ENCODE measurements at regions of chr5 and their contacts with region 1.

Region 1: GRCh38 chr5:4684946-4685345 is 455.2 kb upstream of the ADAMTS16 start:
- DNase-seq: no peak
- ATAC-seq: no peak
- H3K4me3 ChIP-seq: no peak overlapping the region
- H3K27ac ChIP-seq: no peak overlapping the region
- H3K4me1 ChIP-seq: no peaks in the 10 kb centered on the region
- H3K27me3 ChIP-seq: peaks cover 0 to 2% (median 0%) of the 10 kb centered on the region in 7 donors
- CTCF ChIP-seq: no peak

Region 2: DNA sequence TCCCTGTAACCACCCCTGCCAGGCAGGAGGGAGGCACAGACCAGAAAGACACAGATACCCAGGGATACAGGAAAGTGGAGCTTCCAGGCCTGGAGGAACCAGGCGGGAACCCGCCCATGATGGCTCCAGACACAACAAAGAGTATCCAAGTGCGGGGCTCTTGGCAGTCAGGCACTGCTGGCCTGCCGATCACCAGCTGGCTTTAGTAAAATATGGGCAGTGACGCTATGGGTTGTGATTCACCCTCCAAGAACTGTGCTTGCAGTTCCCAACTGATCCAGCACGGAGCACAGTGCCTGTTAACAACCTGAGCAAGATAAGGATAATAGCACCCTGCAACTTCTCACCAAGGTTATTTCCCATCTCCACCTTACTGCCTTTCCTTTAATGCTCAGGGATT is 626.0 kb before region 1 on chr5:
- intact Hi-C with region 1: no loop called
- DNase-seq: peak in 1 of 2 donors; percentile 46
- ATAC-seq: peak in 6 of 8 donors; percentile 57 to 98 (median 76)
- H3K4me3 ChIP-seq: no peak overlapping the region
- H3K27ac ChIP-seq: no peak overlapping the region
- H3K4me1 ChIP-seq: peaks cover 0 to 6% (median 0%) of the 10 kb centered on the region in 9 donors
- H3K27me3 ChIP-seq: peaks cover 0 to 5% (median 0%) of the 10 kb centered on the region in 7 donors
- CTCF ChIP-seq: peak in 1 of 9 donors; percentile 25

Region 3: GRCh38 chr5:4116834-4117233 is 568.1 kb before region 1 on chr5:
- intact Hi-C with region 1: loop called in 1 of 10 experiments (anchors 10 kb)
- DNase-seq: no peak
- ATAC-seq: peak in 1 of 8 donors; percentile 50
- H3K4me3 ChIP-seq: no peak overlapping the region
- H3K27ac ChIP-seq: no peak overlapping the region
- H3K4me1 ChIP-seq: no peaks in the 10 kb centered on the region
- H3K27me3 ChIP-seq: peaks cover 0 to 8% (median 0%) of the 10 kb centered on the region in 7 donors
- CTCF ChIP-seq: no peak